HCT116 (cell line): ENCODE measurements at regions of chr1 and their contacts with region 1.

Region 1: GRCh38 chr1:21573971-21574465 is 64.8 kb downstream of the ALPL start:
- DNase-seq: peak; percentile 53
- ATAC-seq: peak; percentile 87
- H3K4me3 ChIP-seq: no peak overlapping the region
- H3K27ac ChIP-seq: no peak overlapping the region
- H3K4me1 ChIP-seq: peaks cover 12 to 18% of the 10 kb centered on the region in 2 experiments; a peak in 3 of 4 replicates
- H3K27me3 ChIP-seq: no peaks in the 10 kb centered on the region
- CTCF ChIP-seq: peak; percentile 68 to 84 (median 72)
- POLR2A ChIP-seq: no peak
- RAD21 ChIP-seq: peak; percentile 94

Region 2: DNA sequence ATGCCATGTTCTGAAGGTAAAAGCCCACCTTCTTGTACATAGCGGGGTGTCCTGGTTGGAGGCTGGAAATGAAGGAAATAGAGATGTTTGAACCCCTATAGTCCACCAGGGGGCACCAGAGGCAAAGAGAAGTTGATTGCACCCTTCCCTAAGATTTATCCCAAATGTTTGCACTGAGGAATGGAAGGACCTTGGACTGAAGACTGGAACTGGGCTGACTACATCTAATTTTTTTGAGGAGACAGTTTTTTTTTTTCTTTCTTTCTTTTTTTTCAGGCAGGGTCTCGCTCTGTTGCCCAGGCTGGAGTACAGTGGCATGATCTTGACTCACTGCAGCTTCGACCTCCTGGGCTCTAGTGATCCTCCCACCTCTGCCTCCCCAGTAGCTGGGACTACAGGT is 342.0 kb before region 1 on chr1:
- CTCF ChIA-PET with region 1: interaction called, 3 read pairs
- POLR2A ChIA-PET with region 1: no interaction called
- RAD21 ChIA-PET with region 1: no interaction called
- intact Hi-C with region 1: loop called (anchors 5 kb)
- DNase-seq: peak; percentile 26
- ATAC-seq: peak; percentile 81
- H3K4me3 ChIP-seq: no peak overlapping the region
- H3K27ac ChIP-seq: no peak overlapping the region
- H3K4me1 ChIP-seq: peaks cover 0 to 10% of the 10 kb centered on the region in 2 experiments; a peak in 1 of 4 replicates
- H3K27me3 ChIP-seq: no peaks in the 10 kb centered on the region
- CTCF ChIP-seq: peak; percentile 61 to 83 (median 76)
- POLR2A ChIP-seq: no peak
- RAD21 ChIP-seq: peak; percentile 90

Region 3: GRCh38 chr1:21511579-21512522 is 62.2 kb before region 1 on chr1:
- CTCF ChIA-PET with region 1: no interaction called
- POLR2A ChIA-PET with region 1: no interaction called
- RAD21 ChIA-PET with region 1: no interaction called
- intact Hi-C with region 1: loop called (anchors 2 kb)
- DNase-seq: no peak
- ATAC-seq: no peak
- H3K4me3 ChIP-seq: no peak overlapping the region
- H3K27ac ChIP-seq: no peak overlapping the region
- H3K4me1 ChIP-seq: peaks cover 2 to 5% of the 10 kb centered on the region in 2 experiments; a peak in 3 of 4 replicates
- H3K27me3 ChIP-seq: no peaks in the 10 kb centered on the region
- CTCF ChIP-seq: no peak
- POLR2A ChIP-seq: no peak
- RAD21 ChIP-seq: no peak

Region 4: DNA sequence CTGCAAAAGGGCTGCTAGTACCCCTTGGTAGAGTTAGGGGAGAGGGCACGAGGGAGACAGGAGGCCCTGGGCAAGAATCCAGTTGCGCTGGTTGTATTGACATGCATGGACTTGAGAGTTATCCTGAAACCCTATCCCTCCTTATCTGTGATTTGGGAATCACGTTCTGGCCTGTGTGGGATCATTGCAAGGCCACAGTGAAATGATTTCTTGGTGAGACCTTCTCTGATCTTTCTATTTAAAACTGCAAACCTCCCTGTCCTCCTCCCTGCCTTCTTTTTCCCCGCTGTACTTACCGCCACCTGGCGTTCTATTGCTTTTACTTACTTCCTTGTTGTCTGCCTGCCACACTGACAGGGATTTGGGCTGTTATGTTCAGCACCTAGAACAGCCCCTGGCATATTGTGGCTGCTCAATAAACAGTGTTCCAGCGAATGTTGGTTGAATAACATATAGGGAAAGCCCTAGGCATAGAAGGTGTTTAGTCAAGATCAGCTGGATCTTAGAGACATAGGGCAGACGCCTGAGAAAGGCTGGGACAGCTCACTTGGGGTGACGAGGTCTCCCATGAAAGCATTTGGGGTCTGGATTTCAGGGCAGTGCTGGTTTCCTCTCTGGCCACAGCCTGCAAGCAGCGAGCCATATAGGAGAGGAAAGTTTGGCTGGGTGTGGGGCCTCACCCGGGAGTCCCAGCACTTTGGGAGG is 39.2 kb before region 1 on chr1:
- CTCF ChIA-PET with region 1: no interaction called
- POLR2A ChIA-PET with region 1: no interaction called
- RAD21 ChIA-PET with region 1: no interaction called
- intact Hi-C with region 1: loop called (anchors 2 kb)
- DNase-seq: peak; percentile 29
- ATAC-seq: peak; percentile 88
- H3K4me3 ChIP-seq: no peak overlapping the region
- H3K27ac ChIP-seq: no peak overlapping the region
- H3K4me1 ChIP-seq: peaks cover 0 to 2% of the 10 kb centered on the region in 2 experiments; a peak in 1 of 4 replicates
- H3K27me3 ChIP-seq: 0 out of 2 replicates have a peak, but pooled peaks cover 4% of the 10 kb centered on the region
- CTCF ChIP-seq: peak; percentile 69 to 76 (median 72)
- POLR2A ChIP-seq: no peak
- RAD21 ChIP-seq: peak; percentile 75